Endothelial cell of umbilical vein (primary cell): ENCODE measurements at regions of chr19 and their contacts with region 1.

Region 1: DNA sequence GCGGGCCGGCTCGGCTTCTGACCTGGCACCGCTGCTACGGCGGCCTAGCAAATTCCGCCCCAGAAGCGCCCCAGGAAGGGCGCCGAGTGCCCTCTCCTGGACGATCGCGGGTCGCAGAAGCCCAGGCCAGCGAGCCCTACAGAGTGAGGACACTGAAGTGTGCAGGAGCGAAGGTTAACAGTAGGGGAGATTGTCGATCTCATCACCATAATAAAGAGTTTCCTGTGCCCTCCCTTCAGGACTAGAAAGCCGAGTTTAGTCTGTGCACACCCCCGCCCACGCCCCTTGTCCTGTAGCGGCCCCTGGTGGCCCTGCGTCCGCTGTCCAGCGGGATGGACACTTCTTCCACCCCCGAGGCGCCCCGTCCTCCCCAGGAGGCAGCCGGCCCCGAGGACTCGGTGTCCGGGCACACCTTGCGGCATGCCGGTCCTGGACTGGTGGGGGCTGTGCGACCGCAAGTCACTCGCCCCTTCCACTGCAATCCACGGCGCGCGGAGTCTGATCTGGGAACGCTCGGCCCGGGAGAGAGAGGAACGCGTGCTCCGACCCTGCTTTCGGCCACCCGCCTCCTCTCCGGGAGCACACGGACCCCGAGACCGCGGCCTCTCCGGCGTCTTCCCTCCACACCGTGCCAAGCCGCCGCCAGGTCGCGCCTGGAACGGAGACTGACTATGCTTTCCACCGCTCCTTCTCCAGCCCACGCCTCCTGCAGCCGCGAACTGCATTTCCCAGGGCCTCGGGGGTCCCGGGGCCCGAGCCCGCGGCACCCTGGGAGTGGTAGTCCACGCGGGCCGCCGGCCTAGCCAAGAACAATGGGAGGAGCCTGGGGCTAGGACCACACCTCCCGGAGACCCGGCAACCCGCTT is 769 bp upstream of the KMT2B start:
- DNase-seq: peak; percentile 95
- H3K4me3 ChIP-seq: peak overlapping the region; percentile 30 to 57 (median 46)
- H3K27ac ChIP-seq: peak overlapping the region; percentile 36
- H3K4me1 ChIP-seq: peaks cover 17% of the 10 kb centered on the region
- H3K27me3 ChIP-seq: no peaks in the 10 kb centered on the region
- CTCF ChIP-seq: peak; percentile 87 to 91
- POLR2A ChIP-seq: no peak

Region 2: GRCh38 chr19:35352448-35353304 is 364.4 kb before region 1 on chr19:
- CTCF ChIA-PET with region 1: interaction called, 3 read pairs
- POLR2A ChIA-PET with region 1: no interaction called
- dilution Hi-C with region 1: no loop called
- intact Hi-C with region 1: loop called (anchors 1 kb)
- DNase-seq: peak; percentile 66
- H3K4me3 ChIP-seq: no peak overlapping the region
- H3K27ac ChIP-seq: no peak overlapping the region
- H3K4me1 ChIP-seq: no peaks in the 10 kb centered on the region
- H3K27me3 ChIP-seq: no peaks in the 10 kb centered on the region
- CTCF ChIP-seq: peak; percentile 70 to 76
- POLR2A ChIP-seq: no peak

Region 3: DNA sequence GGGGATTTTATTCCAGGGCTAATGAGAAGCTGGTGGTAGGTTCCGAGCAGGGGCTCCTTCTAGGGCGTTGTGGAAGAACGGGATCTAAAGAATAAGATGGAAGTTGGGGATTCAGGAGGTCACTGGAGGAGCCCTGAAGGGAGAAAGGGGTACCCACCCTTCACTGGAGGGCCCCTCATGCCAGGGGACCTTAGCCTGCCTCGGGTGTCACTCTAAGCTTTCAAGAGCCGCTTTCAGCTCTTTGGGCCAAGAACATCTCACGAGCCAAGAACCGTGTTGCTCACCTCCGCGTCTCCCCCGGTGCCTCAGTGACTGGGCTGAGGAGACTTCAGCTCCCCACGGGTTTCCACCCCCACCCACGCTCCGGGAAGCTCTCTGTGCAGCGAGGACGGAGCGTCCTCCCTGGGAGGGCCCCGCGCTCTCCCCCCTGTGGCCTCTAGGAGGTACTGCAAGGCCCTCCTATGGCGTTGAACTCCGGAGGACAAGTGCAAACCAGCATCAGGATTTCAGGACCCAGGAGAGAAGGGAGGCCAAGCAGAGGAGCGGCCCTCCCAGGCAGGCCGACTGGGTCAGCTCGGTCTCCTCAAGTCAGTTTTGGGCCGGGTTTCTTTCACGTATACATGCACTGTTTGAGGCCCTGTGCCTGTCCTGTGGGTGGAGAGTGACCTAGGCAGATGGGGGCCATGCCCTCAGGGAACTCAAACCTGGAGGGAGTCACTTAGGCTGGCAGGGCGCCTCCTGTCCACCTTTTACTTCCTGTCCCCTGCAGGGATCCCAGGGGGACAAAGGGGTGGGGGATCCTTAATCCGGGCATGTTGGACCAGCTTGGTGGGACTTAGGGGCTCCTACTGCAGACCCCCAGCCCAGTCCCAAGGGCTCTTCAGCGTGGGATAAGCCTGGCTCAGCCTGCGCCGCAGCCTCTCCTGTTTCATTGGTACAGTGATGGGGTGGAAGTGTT is 221.6 kb before region 1 on chr19:
- CTCF ChIA-PET with region 1: no interaction called
- POLR2A ChIA-PET with region 1: no interaction called
- dilution Hi-C with region 1: no loop called
- intact Hi-C with region 1: no loop called
- DNase-seq: peak; percentile 44
- H3K4me3 ChIP-seq: no peak overlapping the region
- H3K27ac ChIP-seq: no peak overlapping the region
- H3K4me1 ChIP-seq: no peaks in the 10 kb centered on the region
- H3K27me3 ChIP-seq: no peaks in the 10 kb centered on the region
- CTCF ChIP-seq: peak; percentile 82 to 98
- POLR2A ChIP-seq: no peak

Region 4: DNA sequence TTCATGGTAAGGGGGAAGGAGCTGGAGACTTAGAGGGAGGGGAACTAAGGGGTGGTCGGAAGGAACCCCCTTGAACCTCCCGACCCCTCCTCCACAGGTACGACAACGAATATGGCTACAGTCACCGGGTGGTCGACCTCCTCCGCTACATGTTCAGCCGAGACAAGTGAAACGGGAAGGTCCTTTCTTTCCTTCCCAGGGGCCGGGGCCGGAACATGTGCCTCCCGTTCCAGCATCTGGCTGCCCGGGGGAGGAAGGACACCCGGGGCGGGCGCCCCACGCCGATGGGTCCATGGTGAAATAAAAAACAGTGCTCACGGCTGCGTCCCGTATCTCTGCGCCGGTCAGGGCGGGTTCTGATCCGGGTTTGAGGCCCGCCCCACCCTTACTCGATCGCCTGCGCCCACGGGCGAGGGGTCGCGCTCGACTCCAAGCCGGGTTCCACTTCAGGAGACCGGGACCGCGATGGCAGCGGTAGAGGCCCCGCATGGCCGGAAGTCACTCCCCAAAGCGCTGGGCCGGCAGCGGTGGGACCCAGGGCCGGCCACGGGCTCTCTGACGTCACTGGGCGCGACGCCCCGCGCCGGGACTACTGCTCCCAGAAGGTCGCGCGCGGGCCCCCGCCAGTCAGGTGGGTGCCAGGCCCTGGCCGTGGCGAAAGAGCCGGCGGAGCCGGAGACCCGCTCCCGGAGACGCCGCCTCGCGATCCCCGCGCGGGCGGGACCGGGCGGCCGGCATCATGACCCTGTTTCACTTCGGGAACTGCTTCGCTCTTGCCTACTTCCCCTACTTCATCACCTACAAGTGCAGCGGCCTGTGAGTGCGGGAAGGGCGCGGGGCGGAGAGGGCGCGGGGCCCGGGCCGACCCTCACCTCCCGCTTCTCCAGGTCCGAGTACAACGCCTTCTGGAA is 171.8 kb before region 1 on chr19 and contains the start of gene TMEM147:
- CTCF ChIA-PET with region 1: no interaction called
- POLR2A ChIA-PET with region 1: no interaction called
- dilution Hi-C with region 1: no loop called
- intact Hi-C with region 1: loop called (anchors 1 kb)
- DNase-seq: peak; percentile 82
- H3K4me3 ChIP-seq: peak within 1 kb of the TSS; percentile 77 to 88 (median 88)
- H3K27ac ChIP-seq: peak within 1 kb of the TSS; percentile 79
- H3K4me1 ChIP-seq: peaks cover 16% of the 10 kb centered on the region
- H3K27me3 ChIP-seq: no peaks in the 10 kb centered on the region
- CTCF ChIP-seq: no peak
- POLR2A ChIP-seq: peak; percentile 87
- total RNA-seq, gene TMEM147: 75.8 and 76.1 TPM in 2 replicates

Region 5: GRCh38 chr19:35693830-35694599 is 23.0 kb before region 1 on chr19:
- CTCF ChIA-PET with region 1: interaction called, 11 read pairs
- POLR2A ChIA-PET with region 1: no interaction called
- dilution Hi-C with region 1: no loop called
- intact Hi-C with region 1: loop called (anchors 1 kb)
- DNase-seq: peak; percentile 78
- H3K4me3 ChIP-seq: no peak overlapping the region
- H3K27ac ChIP-seq: no peak overlapping the region
- H3K4me1 ChIP-seq: no peaks in the 10 kb centered on the region
- H3K27me3 ChIP-seq: no peaks in the 10 kb centered on the region
- CTCF ChIP-seq: peak; percentile 97
- POLR2A ChIP-seq: no peak

Region 6: GRCh38 chr19:35740423-35741202 is 23.6 kb after region 1 on chr19:
- CTCF ChIA-PET with region 1: interaction called, 7 read pairs
- POLR2A ChIA-PET with region 1: no interaction called
- dilution Hi-C with region 1: no loop called
- intact Hi-C with region 1: loop called (anchors 1 kb)
- DNase-seq: peak; percentile 97
- H3K4me3 ChIP-seq: peak overlapping the region; percentile 50 to 78 (median 62)
- H3K27ac ChIP-seq: peak overlapping the region; percentile 64
- H3K4me1 ChIP-seq: peaks cover 14% of the 10 kb centered on the region
- H3K27me3 ChIP-seq: no peaks in the 10 kb centered on the region
- CTCF ChIP-seq: no peak
- POLR2A ChIP-seq: peak; percentile 72

Region 7: DNA sequence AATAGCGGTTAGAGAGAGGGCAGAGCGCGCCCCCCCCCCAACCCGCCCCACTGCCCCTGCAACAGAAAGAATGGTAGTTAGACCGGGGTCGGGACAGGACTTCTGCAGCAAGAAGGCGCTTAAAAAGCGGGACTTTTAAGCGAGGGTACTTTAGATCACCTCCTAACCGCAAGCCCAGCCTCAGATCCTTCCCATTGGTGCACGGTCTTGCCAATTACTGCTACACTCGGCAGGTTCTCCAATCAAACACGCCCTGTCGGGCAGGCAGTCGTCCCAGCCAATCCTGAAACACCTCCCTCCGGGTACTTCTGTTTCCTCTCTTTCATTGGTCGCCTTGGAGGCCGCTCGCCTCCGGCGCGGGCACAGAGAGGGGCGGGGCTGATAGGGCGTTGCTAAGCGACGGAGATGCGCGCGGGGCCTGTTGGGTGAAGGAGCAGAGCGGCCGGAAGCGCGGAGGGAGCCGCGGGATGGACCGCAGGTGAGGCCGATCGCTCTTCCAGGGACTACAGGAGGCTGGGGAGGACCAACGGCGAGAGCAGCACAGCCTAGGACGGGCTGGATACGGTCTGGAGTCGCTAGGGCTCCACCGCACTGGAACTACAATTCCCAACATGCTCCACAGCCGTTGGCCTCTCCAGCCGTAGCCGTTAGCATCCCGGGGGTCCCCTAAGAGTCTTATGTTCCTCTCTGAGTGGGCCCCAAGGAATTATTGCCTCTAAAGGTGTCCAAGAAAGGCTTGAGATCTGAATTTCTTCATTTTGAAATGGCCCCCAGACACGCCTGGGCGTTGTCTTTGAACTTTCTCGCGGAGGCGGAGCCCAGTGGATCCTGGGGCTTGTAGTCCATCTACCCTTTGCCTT is 40.9 kb after region 1 on chr19 and contains the start of gene PROSER3:
- CTCF ChIA-PET with region 1: no interaction called
- POLR2A ChIA-PET with region 1: no interaction called
- dilution Hi-C with region 1: no loop called
- intact Hi-C with region 1: loop called (anchors 1 kb)
- DNase-seq: peak; percentile 99
- H3K4me3 ChIP-seq: peak within 1 kb of the TSS; percentile 59 to 89 (median 82)
- H3K27ac ChIP-seq: peak within 1 kb of the TSS; percentile 84
- H3K4me1 ChIP-seq: peaks cover 22% of the 10 kb centered on the region
- H3K27me3 ChIP-seq: no peaks in the 10 kb centered on the region
- CTCF ChIP-seq: no peak
- POLR2A ChIP-seq: peak; percentile 29
- total RNA-seq, gene PROSER3: 28.3 and 32.1 TPM in 2 replicates

Region 8: DNA sequence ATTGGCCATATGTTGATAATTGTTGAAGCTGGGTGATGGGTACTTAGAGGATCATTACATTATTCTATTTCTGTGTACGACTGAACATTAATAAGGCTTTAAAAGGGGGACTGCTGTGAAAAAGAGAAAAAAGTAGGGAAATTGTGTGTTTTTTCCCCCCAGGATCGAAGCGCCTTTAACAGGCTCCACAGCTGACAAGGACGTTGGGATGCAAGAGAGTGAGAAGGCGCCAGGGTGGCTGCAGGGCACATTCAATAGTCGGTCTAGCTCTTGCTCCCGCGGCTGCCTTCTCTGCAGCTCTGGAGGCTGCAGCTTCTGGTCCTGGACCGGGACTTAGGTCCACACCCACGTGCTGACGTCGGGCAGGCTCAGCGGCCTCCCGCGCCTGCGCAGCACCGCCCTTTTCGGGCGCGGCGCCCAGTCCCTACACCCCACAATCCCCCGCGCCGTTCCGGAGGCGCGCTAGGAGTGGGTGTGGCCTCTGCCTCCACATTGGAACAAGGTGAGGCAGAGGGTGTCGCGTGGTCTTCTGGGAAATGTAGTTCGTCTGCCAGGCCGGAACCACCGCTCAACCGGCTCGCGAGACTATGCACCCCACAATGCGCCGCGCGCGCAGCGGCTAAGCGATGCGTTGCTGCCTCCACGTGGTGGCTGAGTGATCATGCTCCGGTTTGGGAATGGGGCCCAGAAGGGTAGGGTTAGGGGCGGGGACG is 214.3 kb after region 1 on chr19:
- CTCF ChIA-PET with region 1: no interaction called
- POLR2A ChIA-PET with region 1: no interaction called
- dilution Hi-C with region 1: no loop called
- intact Hi-C with region 1: loop called (anchors 1 kb)
- DNase-seq: peak; percentile 100
- H3K4me3 ChIP-seq: peak overlapping the region in 1 of 3 experiments; percentile 37
- H3K27ac ChIP-seq: no peak overlapping the region
- H3K4me1 ChIP-seq: peaks cover 11% of the 10 kb centered on the region
- H3K27me3 ChIP-seq: no peaks in the 10 kb centered on the region
- CTCF ChIP-seq: peak; percentile 88
- POLR2A ChIP-seq: peak; percentile 98